Endothelial cell of umbilical vein (primary cell): ENCODE measurements at regions of chr16 and their contacts with region 1.

Region 1: GRCh38 chr16:54178478-54178976 is 108.1 kb downstream of the IRX3 start:
- DNase-seq: no peak
- H3K4me3 ChIP-seq: no peak overlapping the region
- H3K27ac ChIP-seq: no peak overlapping the region
- H3K4me1 ChIP-seq: no peaks in the 10 kb centered on the region
- H3K27me3 ChIP-seq: peaks cover 4 to 9% of the 10 kb centered on the region in 2 experiments
- CTCF ChIP-seq: no peak
- POLR2A ChIP-seq: no peak

Region 2: DNA sequence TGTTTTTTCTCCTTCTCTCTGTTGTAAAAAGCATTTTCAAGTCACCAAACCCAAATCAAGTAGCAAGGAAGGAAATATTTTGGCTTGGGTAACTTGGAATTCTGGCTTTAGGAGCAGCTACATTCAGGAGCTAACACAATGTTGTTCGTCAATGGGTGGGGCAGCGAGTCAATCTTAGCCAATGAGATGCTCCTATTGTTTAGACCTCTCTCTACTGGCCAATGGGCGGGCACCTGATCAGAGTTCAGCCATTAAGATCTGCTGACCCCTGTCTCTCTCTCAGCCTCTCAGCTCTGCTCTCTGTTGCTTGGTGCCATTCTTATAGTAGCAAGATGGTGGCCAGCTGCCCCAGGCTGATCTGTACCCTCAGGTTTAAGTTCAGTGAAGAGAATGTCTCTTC is 24.9 kb after region 1 on chr16:
- CTCF ChIA-PET with region 1: no interaction called
- POLR2A ChIA-PET with region 1: no interaction called
- dilution Hi-C with region 1: no loop called
- intact Hi-C with region 1: loop called (anchors 1 kb)
- DNase-seq: no peak
- H3K4me3 ChIP-seq: no peak overlapping the region
- H3K27ac ChIP-seq: no peak overlapping the region
- H3K4me1 ChIP-seq: no peaks in the 10 kb centered on the region
- H3K27me3 ChIP-seq: no peaks in the 10 kb centered on the region
- CTCF ChIP-seq: no peak
- POLR2A ChIP-seq: no peak